Activated CD8-positive, alpha-beta T cell treated with anti-CD3 and anti-CD28 coated beads for 36 hours (primary cell): ENCODE measurements at regions of chr14 and their contacts with region 1.

Region 1: DNA sequence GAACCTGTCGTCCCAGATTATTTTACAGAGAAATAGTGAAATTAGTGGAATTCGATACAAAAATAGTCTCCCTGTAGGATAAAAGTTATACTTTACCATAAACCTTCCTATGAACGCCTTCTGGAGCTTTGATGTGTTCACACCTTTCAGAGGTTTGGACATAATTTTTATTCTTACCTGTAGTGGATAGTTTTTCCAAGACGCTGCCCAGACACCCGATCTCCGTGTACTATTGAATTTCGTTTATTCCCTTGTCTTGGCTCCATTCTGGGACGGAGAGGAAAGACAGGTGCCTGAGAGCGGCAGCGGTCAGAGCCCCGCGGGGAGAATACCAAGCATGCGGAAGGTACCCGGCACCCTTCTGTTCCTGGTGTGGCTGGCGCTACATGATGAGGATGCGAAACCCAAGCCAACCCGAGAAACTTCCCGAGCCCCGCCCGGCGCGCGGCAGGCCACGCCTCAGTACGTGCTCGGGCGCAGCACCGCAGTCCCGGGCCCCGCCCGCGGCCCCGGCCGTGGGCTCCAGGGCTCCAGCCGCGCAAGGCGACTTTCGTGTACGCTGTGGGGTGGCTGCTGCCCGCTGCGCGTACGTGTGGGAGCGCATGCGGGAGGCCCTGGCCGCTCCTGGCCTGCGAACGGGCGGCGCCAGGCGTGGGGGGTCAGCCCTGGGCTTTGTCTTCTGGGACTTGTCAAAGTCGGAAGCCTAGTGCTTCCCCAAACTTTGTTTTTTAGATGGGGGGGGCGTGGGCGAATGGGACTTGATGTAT is 11.3 kb upstream of the SNAPC1 start:
- DNase-seq: peak; percentile 91
- ATAC-seq: peak; percentile 93
- H3K4me3 Mint-ChIP-seq: peak overlapping the region; percentile 93
- H3K27ac Mint-ChIP-seq: peak overlapping the region; percentile 90
- H3K4me1 Mint-ChIP-seq: peaks cover 33% of the 10 kb centered on the region
- H3K27me3 Mint-ChIP-seq: no peaks in the 10 kb centered on the region
- CTCF ChIP-seq: no peak

Region 2: GRCh38 chr14:61761959-61762786 is 11.3 kb after region 1 on chr14 and contains the start of gene SNAPC1:
- CTCF ChIA-PET with region 1: interaction called, 13 read pairs
- POLR2A ChIA-PET with region 1: interaction called, 9 read pairs
- intact Hi-C with region 1: no loop called
- DNase-seq: peak; percentile 99
- ATAC-seq: peak; percentile 99
- H3K4me3 Mint-ChIP-seq: peak within 1 kb of the TSS; percentile 92
- H3K27ac Mint-ChIP-seq: peak within 1 kb of the TSS; percentile 93
- H3K4me1 Mint-ChIP-seq: peaks cover 39% of the 10 kb centered on the region
- H3K27me3 Mint-ChIP-seq: no peaks in the 10 kb centered on the region
- CTCF ChIP-seq: no peak
- total RNA-seq, gene SNAPC1: 11.4 to 11.6 TPM